Activated CD4-positive, alpha-beta T cell treated with anti-CD3 and anti-CD28 coated beads, Interleukin-2, amount 10 ng/mL, durations not matched to agents 24 days and 14 days (primary cell): ENCODE measurements at regions of chr7 and their contacts with region 1.

Region 1: GRCh38 chr7:64794171-64794844 is at the start of gene ZNF138:
- DNase-seq: peak; percentile 97
- H3K4me3 Mint-ChIP-seq: peak within 1 kb of the TSS; percentile 100
- H3K27ac Mint-ChIP-seq: peak within 1 kb of the TSS; percentile 97
- H3K4me1 Mint-ChIP-seq: peaks cover 13% of the 10 kb centered on the region
- H3K27me3 Mint-ChIP-seq: no peaks in the 10 kb centered on the region
- total RNA-seq, gene ZNF138: 8.6 and 9.2 TPM in 2 replicates

Region 2: DNA sequence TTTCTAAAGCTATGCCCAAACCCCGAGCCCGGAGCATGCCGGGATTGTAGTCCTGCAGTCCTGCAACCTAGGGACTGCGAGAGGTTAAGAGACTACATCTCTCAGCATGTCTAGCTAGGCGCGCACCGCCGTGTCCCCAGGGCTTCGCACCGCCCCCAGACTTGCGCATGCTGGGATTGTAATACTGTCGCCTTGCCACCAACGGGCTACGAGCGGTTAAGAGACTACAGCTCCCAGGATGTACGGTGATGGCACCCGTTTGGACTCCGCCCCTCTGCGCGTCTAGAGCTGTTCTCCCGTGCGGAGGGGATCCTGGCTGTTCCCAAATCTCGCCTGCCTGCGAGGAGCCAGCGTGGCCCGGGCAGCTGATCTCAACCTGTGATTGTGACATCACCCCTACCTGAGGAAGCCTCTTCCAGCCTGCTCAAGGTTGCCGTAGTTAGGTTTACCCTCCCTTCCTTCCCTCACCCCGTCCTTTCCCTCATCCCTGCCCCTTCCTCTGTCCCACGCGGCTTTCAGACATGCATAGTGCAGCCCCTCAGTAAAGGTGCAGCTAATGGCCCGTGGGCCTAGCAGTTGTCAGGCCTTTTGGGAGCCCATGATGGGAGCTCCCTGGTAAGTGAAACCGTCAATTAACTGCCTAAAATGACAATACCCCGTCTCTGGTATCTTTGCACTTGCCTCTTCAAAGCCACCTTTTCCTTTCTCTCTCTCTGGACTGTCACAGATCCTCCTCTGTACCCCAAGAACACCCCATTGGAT is 486.9 kb before region 1 on chr7:
- intact Hi-C with region 1: loop called (anchors 1 kb)
- DNase-seq: peak; percentile 97
- H3K4me3 Mint-ChIP-seq: peak overlapping the region; percentile 97
- H3K27ac Mint-ChIP-seq: peak overlapping the region; percentile 93
- H3K4me1 Mint-ChIP-seq: peaks cover 14% of the 10 kb centered on the region
- H3K27me3 Mint-ChIP-seq: no peaks in the 10 kb centered on the region

Region 3: DNA sequence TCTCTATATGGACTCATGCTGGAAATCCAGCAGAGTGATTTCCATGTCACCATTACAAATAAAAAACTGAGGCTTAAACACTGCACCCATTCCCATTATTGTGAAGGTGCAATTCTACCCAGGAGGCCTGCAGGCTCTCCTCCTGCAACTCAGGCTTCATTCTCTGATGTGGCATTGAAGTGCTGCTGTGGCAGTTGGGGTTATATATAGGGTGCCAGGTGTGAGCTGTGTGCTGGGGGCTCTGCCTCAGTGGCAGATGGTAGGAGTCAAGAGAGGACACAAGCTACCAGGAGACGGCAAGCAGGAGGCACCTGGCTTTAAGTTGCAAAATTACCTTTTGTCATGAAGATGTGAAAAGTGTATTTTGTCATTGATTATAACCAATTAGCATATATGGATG is 107.1 kb before region 1 on chr7:
- intact Hi-C with region 1: no loop called
- DNase-seq: no peak
- H3K4me3 Mint-ChIP-seq: no peak overlapping the region
- H3K27ac Mint-ChIP-seq: no peak overlapping the region
- H3K4me1 Mint-ChIP-seq: peaks cover 10% of the 10 kb centered on the region
- H3K27me3 Mint-ChIP-seq: no peaks in the 10 kb centered on the region